Heart left ventricle (tissue), 16 donors: ENCODE measurements at regions of chr19 and their contacts with region 1.

Region 1: DNA sequence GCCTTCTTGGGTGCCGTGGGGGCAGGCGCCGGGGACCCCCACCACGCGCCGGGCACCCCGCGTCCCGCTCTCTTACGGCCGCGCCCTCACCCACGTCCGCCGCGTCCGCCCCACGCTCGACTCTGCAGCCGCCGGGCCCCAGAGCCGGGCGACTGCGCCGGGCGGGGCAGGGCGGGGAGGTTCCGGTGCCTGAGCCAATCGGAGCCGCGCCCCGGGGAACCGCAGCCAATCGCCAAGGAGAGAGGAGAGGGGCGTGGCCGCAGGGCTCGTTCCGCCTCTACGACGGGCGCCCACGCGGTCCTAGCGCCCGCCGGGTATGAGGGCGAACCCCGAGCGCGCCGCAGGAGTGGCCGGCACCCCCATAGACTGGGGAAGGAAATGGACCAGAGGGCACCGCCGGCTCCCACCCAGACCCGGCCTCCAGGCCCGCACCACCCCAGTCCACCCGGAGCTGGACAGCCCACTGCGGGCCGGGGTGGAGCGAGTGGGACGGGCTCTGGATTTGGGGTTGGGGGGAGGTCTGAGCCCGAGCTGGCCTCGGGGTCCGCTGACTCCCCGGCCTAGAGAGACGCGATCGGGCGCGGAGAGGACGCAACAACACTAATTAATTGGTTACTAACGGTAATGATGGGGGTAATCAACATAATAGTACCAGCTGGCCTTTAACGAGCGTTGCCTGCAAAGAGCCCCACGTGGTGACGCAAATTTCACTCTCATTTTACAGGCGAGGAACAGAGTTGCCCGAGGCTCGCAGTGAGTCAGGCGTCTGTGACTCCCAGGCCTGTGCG is at the start of gene MFSD12:
- DNase-seq: peak; percentile 96 to 98 (median 96)
- ATAC-seq: peak; percentile 97 to 98 (median 98)
- H3K4me3 ChIP-seq: peak within 1 kb of the TSS; percentile 66 to 99 (median 91)
- H3K27ac ChIP-seq: peak within 1 kb of the TSS; percentile 32 to 86 (median 74)
- H3K4me1 ChIP-seq: peaks cover 0 to 51% (median 28%) of the 10 kb centered on the region in 12 donors
- H3K27me3 ChIP-seq: no peaks in the 10 kb centered on the region
- CTCF ChIP-seq: no peak
- POLR2A ChIP-seq: peak in 1 of 2 donors; percentile 92
- total RNA-seq, gene MFSD12: 15.7 to 62.8 (median 23.4) TPM

Region 2: GRCh38 chr19:3505598-3506383 is 51.9 kb before region 1 on chr19 and contains the start of gene FZR1:
- intact Hi-C with region 1: loop called in 1 of 10 experiments (anchors 2 kb)
- DNase-seq: peak; percentile 99 to 100 (median 99)
- ATAC-seq: peak; percentile 96 to 98 (median 96)
- H3K4me3 ChIP-seq: peak within 1 kb of the TSS; percentile 81 to 100 (median 98)
- H3K27ac ChIP-seq: peak within 1 kb of the TSS; percentile 36 to 95 (median 84)
- H3K4me1 ChIP-seq: peaks cover 4 to 41% (median 18%) of the 10 kb centered on the region in 12 donors
- H3K27me3 ChIP-seq: no peaks in the 10 kb centered on the region
- CTCF ChIP-seq: peak in 4 of 12 donors; percentile 6 to 25 (median 16)
- POLR2A ChIP-seq: peak; percentile 29 to 65
- total RNA-seq, gene FZR1: 15.4 to 41.0 (median 26.4) TPM

Region 3: DNA sequence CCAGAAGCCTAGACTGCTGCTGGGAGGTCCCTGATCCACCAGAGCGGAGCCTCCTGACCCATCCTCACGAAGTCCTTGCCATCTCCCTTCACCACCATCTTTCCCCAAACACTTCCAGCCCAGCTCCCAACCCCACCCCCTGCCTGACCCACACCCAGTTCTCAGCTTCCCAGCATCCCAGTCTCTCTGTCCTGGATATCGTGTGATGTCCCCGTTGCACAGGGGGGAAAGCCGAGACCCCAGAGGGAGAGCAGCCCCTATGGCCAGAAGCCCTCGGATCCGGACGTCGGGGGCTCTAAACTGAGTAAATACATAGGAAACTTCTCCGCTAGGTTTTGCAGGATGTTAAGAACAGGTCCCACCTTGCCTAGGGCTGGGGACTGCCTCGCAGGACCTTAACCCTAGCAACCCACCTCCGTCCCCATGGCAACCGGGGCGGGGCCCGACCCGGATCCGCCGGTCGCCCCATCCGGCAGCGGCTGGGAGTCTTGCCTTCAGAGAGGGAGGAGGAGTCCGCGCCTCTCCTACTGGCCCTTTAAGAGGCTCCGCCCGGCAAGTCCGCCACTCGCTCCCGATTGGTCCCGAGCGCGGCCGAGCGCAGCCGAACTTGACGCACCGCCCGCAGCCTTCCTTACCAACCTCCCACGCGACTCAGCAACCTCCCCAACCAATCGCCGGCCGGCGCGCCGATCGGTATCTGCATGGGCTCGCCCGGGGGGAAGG is 14.6 kb after region 1 on chr19:
- intact Hi-C with region 1: loop called in 2 of 10 experiments (anchors 2 kb)
- DNase-seq: peak; percentile 100
- ATAC-seq: peak; percentile 96 to 98 (median 98)
- H3K4me3 ChIP-seq: peak overlapping the region in 11 of 12 donors; percentile 29 to 97 (median 84)
- H3K27ac ChIP-seq: peak overlapping the region in 8 of 12 donors; percentile 14 to 85 (median 50)
- H3K4me1 ChIP-seq: peaks cover 0 to 37% (median 22%) of the 10 kb centered on the region in 12 donors
- H3K27me3 ChIP-seq: no peaks in the 10 kb centered on the region
- CTCF ChIP-seq: no peak
- POLR2A ChIP-seq: peak in 1 of 2 donors; percentile 11

Region 4: DNA sequence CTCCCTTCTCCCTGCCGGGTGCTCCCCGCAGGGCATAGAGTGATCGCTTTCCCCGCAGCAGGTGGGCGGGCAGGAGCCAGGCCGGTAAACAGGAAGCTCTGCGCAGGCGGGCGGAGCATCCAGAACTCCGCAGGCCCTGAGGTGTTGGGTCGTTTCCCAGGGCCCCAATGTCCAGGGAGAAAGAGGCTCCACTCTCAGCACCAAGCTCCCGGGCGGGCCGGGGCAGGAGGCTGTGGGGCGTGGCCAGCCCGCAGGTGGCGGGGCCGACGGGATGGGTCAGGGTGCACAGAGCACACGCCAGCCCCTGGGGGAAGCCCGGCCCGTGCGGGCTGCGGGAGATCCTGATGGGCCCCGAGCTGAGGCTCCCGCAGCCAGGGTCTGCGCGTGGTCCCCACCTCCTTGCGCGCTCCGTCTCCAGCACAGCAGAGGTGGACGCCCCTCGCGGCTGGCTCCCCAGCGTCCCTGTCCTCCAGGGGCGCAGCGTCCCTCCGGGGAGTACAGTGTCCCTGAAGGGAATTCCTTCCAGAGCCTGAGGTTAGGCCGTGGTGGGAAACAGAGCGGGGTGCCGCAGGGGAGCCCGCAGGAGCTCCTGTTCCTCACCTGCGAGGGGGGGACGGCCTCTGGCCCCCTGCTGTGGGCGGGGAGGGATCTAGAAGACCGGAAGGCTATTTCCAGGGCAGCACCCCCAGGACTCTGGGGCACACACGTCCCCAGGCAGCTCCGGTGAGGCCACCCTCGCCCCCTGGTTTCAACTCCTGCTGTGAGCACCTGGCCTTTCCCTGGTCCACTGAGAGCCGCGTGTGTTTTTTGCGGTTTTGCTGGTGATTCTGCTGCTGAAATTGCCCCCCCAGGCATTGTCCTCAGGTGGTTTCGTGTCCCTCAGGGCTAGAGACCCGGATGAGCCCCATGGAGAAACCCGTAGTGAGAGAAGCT is 130.4 kb after region 1 on chr19:
- intact Hi-C with region 1: no loop called
- DNase-seq: peak in 1 of 5 donors; percentile 43
- ATAC-seq: peak in 1 of 4 donors; percentile 3
- H3K4me3 ChIP-seq: peak overlapping the region in 6 of 12 donors; percentile 4 to 45 (median 15)
- H3K27ac ChIP-seq: peak overlapping the region in 8 of 12 donors; percentile 15 to 65 (median 42)
- H3K4me1 ChIP-seq: peaks cover 0 to 37% (median 18%) of the 10 kb centered on the region in 12 donors
- H3K27me3 ChIP-seq: no peaks in the 10 kb centered on the region
- CTCF ChIP-seq: no peak
- POLR2A ChIP-seq: no peak

Region 5: DNA sequence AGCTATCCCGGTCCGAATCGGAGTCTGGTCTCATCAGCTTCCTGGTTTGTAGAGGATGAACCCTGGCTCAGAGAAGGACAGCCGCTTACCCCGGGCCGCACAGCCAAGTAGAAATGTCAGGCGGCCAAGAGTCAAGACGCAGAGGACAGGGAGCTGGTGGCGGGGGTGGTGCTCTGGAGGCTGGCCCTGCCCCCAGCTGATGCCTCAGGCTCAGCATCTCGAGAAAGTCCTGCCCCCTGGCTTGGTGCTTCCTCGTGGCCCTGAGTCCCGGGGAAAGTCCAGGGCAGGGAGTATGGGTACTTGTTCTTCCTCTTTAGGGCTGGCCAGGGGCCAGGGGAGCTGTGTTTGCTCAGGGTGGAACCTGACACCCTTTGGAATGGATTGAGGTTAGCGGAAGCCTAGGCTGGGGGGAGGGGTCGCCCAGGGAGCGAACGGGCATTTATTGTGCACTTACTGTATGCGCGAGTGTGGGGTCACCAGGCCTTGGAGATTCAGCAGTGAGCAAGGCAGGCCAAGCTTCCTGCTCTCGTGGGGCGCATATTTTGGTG is 152.7 kb after region 1 on chr19:
- intact Hi-C with region 1: loop called in 1 of 10 experiments (anchors 10 kb)
- DNase-seq: peak; percentile 59 to 89 (median 87)
- ATAC-seq: peak in 3 of 4 donors; percentile 64 to 79 (median 72)
- H3K4me3 ChIP-seq: no peak overlapping the region
- H3K27ac ChIP-seq: no peak overlapping the region
- H3K4me1 ChIP-seq: peaks cover 0 to 19% (median 2%) of the 10 kb centered on the region in 12 donors
- H3K27me3 ChIP-seq: peaks cover 0 to 27% (median 0%) of the 10 kb centered on the region in 9 donors
- CTCF ChIP-seq: no peak
- POLR2A ChIP-seq: no peak